Activated B cell treated with CpG ODN at 0.5 μM for 24 hours (primary cell): ENCODE measurements at regions of chr17 and their contacts with region 1.

Region 1: DNA sequence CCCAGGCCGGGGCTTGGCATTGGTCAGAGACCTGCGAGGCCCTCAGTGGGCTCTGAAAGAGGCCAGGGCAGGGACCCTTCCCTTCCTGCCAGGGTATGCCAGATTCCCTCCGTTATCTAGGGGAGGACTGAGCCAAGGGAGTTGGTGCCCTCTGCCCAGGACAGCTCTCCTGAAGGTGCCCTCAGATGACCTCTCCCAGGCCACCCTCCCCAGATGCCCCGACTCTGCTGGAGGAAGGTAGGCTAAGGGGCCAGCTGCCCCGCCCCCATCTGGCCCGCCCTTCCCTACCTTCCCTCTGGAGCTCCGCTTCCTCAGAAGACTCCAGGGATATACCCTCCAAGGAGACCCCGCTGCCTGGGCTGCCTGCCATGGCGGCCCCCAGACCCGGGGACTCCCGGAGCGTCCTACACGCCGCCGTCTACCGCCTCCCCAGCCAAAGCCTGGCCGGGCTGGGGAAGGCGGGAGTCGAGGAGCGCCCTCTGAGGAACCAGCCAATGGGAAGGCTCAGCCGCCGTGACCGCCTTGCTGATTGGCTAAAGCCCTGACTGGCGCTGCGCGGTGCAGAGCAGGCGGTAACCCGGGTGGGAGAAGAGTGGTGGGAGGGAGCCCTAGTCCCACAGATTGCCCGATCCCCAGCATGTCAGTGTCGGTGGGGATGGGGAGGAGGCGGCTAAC is 7.0 kb downstream of the MPP2 start:
- DNase-seq: peak; percentile 56
- ATAC-seq: peak; percentile 100
- H3K4me3 Mint-ChIP-seq: peak overlapping the region; percentile 76
- H3K27ac Mint-ChIP-seq: no peak overlapping the region
- H3K4me1 Mint-ChIP-seq: peaks cover 9% of the 10 kb centered on the region
- H3K27me3 Mint-ChIP-seq: peaks cover 68% of the 10 kb centered on the region
- CTCF ChIP-seq: no peak

Region 2: DNA sequence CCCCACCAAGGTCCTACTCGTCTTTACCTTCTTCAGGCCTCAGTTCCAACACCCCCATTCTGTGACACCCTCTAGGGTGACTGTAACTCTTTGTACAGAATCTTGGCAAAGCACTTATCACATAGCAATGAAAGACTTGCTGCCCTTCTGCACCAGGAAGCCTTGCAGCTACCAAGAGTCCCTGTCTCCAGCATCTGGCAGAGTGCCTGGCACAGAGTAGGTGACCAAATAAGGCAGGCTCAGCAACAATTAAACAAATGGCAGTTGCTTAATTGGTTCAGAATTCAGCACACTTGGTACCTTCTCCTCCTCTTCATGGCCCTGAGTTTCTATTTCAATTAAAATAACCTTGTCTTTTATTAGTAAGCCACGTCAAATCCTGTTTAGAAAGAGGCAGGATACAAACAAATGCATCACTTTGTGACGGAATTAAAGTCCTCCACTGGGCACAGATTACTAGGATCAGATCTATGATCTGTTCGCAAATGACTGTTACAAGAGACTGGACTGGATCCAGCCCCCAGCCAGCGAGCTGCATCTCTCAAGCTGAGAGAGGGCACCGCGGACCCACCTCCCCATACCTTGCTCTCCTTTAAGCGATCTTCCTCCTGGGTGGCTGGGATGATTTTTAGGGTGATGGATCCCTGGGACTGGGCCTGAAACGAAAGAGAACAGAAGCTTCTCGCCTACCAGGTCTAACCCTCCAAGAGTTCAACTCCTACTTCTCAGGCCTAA is 76.8 kb before region 1 on chr17:
- CTCF ChIA-PET with region 1: no interaction called
- POLR2A ChIA-PET with region 1: no interaction called
- intact Hi-C with region 1: loop called (anchors 10 kb)
- DNase-seq: no peak
- ATAC-seq: no peak
- H3K4me3 Mint-ChIP-seq: no peak overlapping the region
- H3K27ac Mint-ChIP-seq: no peak overlapping the region
- H3K4me1 Mint-ChIP-seq: no peaks in the 10 kb centered on the region
- H3K27me3 Mint-ChIP-seq: peaks cover 6% of the 10 kb centered on the region
- CTCF ChIP-seq: no peak

Region 3: GRCh38 chr17:43936434-43936833 is 36.1 kb after region 1 on chr17:
- CTCF ChIA-PET with region 1: no interaction called
- POLR2A ChIA-PET with region 1: no interaction called
- intact Hi-C with region 1: no loop called
- DNase-seq: no peak
- ATAC-seq: no peak
- H3K4me3 Mint-ChIP-seq: no peak overlapping the region
- H3K27ac Mint-ChIP-seq: no peak overlapping the region
- H3K4me1 Mint-ChIP-seq: peaks cover 8% of the 10 kb centered on the region
- H3K27me3 Mint-ChIP-seq: peaks cover 24% of the 10 kb centered on the region
- CTCF ChIP-seq: no peak